Mammary epithelial cell (primary cell): ENCODE measurements at regions of chr13 and their contacts with region 1.

Region 1: GRCh38 chr13:43786773-43787517 is at the start of gene ENOX1:
- DNase-seq: peak; percentile 64
- H3K4me3 ChIP-seq: peak within 1 kb of the TSS; percentile 66 to 73 (median 72)
- H3K27ac ChIP-seq: peak within 1 kb of the TSS; percentile 40
- H3K4me1 ChIP-seq: peaks cover 19% of the 10 kb centered on the region
- H3K27me3 ChIP-seq: no peaks in the 10 kb centered on the region
- CTCF ChIP-seq: peak in 1 of 2 donors; percentile 31
- total RNA-seq, gene ENOX1: 0.17 to 1.2 TPM

Region 2: GRCh38 chr13:43085545-43085944 is 701.4 kb before region 1 on chr13:
- CTCF ChIA-PET with region 1: no interaction called
- dilution Hi-C with region 1: no loop called
- in situ Hi-C with region 1: loop called in 1 of 2 experiments (anchors 25 kb)
- intact Hi-C with region 1: loop called (anchors 5 kb)
- DNase-seq: peak; percentile 12
- H3K4me3 ChIP-seq: no peak overlapping the region
- H3K27ac ChIP-seq: no peak overlapping the region
- H3K4me1 ChIP-seq: no peaks in the 10 kb centered on the region
- H3K27me3 ChIP-seq: no peaks in the 10 kb centered on the region
- CTCF ChIP-seq: peak; percentile 44 to 45

Region 3: GRCh38 chr13:43303033-43303729 is 483.8 kb before region 1 on chr13:
- CTCF ChIA-PET with region 1: no interaction called
- dilution Hi-C with region 1: no loop called
- in situ Hi-C with region 1: no loop called
- intact Hi-C with region 1: loop called (anchors 1 kb)
- DNase-seq: peak; percentile 23
- H3K4me3 ChIP-seq: no peak overlapping the region
- H3K27ac ChIP-seq: no peak overlapping the region
- H3K4me1 ChIP-seq: peaks cover 17% of the 10 kb centered on the region
- H3K27me3 ChIP-seq: no peaks in the 10 kb centered on the region
- CTCF ChIP-seq: peak; percentile 16 to 69

Region 4: DNA sequence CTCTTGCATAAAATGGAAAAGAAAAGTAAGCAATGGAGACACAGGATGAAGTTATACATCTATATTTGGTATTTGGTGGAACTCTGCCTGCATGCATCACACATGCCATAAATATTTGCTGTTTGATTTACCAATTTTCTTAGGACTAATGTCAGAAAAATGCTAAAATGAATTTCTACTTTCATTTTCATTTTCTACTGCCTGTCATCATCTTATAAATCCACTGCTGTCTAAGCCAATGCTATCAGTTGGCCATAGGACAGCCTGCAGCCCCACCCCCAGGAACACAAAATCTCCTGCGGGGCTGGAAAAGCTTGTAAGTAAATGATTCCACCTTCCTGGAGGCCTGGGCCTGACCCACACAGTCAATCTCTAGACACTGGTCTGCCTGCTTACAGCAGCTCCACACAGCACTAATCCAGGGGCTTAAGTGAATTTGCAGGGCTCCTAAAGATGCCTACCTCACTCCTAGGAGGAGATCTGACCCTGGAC is 122.2 kb before region 1 on chr13:
- CTCF ChIA-PET with region 1: no interaction called
- dilution Hi-C with region 1: no loop called
- in situ Hi-C with region 1: no loop called
- intact Hi-C with region 1: loop called (anchors 10 kb)
- DNase-seq: peak; percentile 22
- H3K4me3 ChIP-seq: no peak overlapping the region
- H3K27ac ChIP-seq: no peak overlapping the region
- H3K4me1 ChIP-seq: peaks cover 8% of the 10 kb centered on the region
- H3K27me3 ChIP-seq: no peaks in the 10 kb centered on the region
- CTCF ChIP-seq: no peak

Region 5: GRCh38 chr13:44004878-44005277 is 217.9 kb after region 1 on chr13:
- CTCF ChIA-PET with region 1: no interaction called
- dilution Hi-C with region 1: no loop called
- in situ Hi-C with region 1: no loop called
- intact Hi-C with region 1: no loop called
- DNase-seq: peak; percentile 75
- H3K4me3 ChIP-seq: no peak overlapping the region
- H3K27ac ChIP-seq: no peak overlapping the region
- H3K4me1 ChIP-seq: peaks cover 9% of the 10 kb centered on the region
- H3K27me3 ChIP-seq: no peaks in the 10 kb centered on the region
- CTCF ChIP-seq: no peak

Region 6: GRCh38 chr13:44449999-44450708 is 663.2 kb after region 1 on chr13:
- CTCF ChIA-PET with region 1: no interaction called
- dilution Hi-C with region 1: no loop called
- in situ Hi-C with region 1: no loop called
- intact Hi-C with region 1: no loop called
- DNase-seq: peak; percentile 72
- H3K4me3 ChIP-seq: no peak overlapping the region
- H3K27ac ChIP-seq: no peak overlapping the region
- H3K4me1 ChIP-seq: no peaks in the 10 kb centered on the region
- H3K27me3 ChIP-seq: no peaks in the 10 kb centered on the region
- CTCF ChIP-seq: no peak